ENCODE measurements at regions of chr3 and their contacts with region 1.

Region 1: GRCh38 chr3:151800431-151800830 is 13.5 kb upstream of the AADAC start:
- DNase-seq: peak; percentile 12
- ATAC-seq: no peak
- H3K4me3 ChIP-seq: no peak overlapping the region
- H3K27ac ChIP-seq: no peak overlapping the region
- H3K4me1 ChIP-seq: peaks cover 14% of the 10 kb centered on the region
- H3K27me3 ChIP-seq: no peaks in the 10 kb centered on the region
- CTCF ChIP-seq: no peak
- EP300 ChIP-seq: no peak
- POLR2A ChIP-seq: no peak
- RAD21 ChIP-seq: no peak

Region 2: GRCh38 chr3:151816091-151816604 is 15.7 kb after region 1 on chr3:
- CTCF ChIA-PET with region 1: no interaction called
- POLR2A ChIA-PET with region 1: interaction called, 3 read pairs
- in situ Hi-C with region 1: no loop called
- intact Hi-C with region 1: loop called (anchors 2 kb)
- DNase-seq: peak; percentile 79
- ATAC-seq: peak; percentile 97
- H3K4me3 ChIP-seq: peak overlapping the region in 2 of 3 experiments; percentile 18 to 20; a peak in 2 of 6 replicates
- H3K27ac ChIP-seq: peak overlapping the region; percentile 88
- H3K4me1 ChIP-seq: peaks cover 74% of the 10 kb centered on the region
- H3K27me3 ChIP-seq: no peaks in the 10 kb centered on the region
- CTCF ChIP-seq: no peak
- EP300 ChIP-seq: peak in 1 of 2 experiments; percentile 86; a peak in 2 of 4 replicates
- POLR2A ChIP-seq: no peak
- RAD21 ChIP-seq: no peak